Activated CD4-positive, alpha-beta memory T cell treated with anti-CD3 and anti-CD28 coated beads, Interleukin-2, amount 10 ng/mL, durations not matched to agents 7 days and 5 days (primary cell): ENCODE measurements at regions of chr7 and their contacts with region 1.

Region 1: DNA sequence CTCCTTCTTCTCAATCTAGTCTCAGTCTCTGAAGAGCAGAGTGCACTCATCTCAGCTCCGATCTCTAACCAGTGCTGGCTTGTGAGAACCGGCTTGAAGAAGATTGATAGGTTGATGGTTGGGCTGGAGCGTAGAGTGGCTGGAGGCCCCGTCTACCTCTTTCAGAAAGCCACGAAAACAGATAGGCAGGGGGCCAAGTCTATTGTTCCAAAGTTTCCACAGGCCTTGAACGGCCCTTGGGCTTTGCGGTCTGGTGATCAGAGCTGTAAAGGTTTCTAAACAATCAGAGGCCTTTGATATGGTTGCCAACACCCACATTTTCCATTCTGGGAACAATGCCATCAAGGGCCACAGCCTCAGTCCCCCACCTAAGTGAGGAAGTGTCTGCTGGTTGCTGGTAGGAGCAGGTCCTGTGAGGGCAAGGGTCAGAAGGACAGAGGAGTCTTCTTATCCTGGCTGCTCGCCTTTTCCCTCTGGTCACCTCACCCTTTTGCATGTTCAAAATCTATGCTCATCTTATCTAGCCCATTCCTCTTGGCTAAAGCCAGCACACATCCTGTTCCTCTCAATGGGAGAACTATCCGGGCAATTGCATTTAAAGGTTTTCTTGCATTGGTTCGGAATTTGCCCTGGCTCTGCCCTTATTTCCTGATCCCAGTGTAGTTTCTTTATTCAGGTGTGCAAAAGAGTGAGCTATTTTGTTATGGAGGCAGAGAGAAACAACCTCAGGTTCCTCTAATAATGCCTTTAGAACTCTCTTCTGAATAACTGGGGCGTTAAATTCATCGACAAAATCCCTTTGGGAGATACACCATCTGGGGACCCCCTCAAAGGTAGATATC is 70.3 kb upstream of the KMT2E start:
- DNase-seq: peak; percentile 80
- H3K4me3 Mint-ChIP-seq: peak overlapping the region; percentile 82
- H3K27ac Mint-ChIP-seq: peak overlapping the region; percentile 98
- H3K4me1 Mint-ChIP-seq: peaks cover 71% of the 10 kb centered on the region
- H3K27me3 Mint-ChIP-seq: no peaks in the 10 kb centered on the region

Region 2: GRCh38 chr7:104923010-104923421 is 20.7 kb before region 1 on chr7:
- CTCF ChIA-PET with region 1: interaction called, 6 read pairs
- POLR2A ChIA-PET with region 1: interaction called, 10 read pairs
- DNase-seq: peak; percentile 82
- H3K4me3 Mint-ChIP-seq: no peak overlapping the region
- H3K27ac Mint-ChIP-seq: no peak overlapping the region
- H3K4me1 Mint-ChIP-seq: peaks cover 10% of the 10 kb centered on the region
- H3K27me3 Mint-ChIP-seq: peaks cover 6% of the 10 kb centered on the region

Region 3: GRCh38 chr7:104931181-104931781 is 12.4 kb before region 1 on chr7:
- CTCF ChIA-PET with region 1: interaction called, 4 read pairs
- POLR2A ChIA-PET with region 1: interaction called, 10 read pairs
- DNase-seq: no peak
- H3K4me3 Mint-ChIP-seq: no peak overlapping the region
- H3K27ac Mint-ChIP-seq: no peak overlapping the region
- H3K4me1 Mint-ChIP-seq: no peaks in the 10 kb centered on the region
- H3K27me3 Mint-ChIP-seq: no peaks in the 10 kb centered on the region

Region 4: DNA sequence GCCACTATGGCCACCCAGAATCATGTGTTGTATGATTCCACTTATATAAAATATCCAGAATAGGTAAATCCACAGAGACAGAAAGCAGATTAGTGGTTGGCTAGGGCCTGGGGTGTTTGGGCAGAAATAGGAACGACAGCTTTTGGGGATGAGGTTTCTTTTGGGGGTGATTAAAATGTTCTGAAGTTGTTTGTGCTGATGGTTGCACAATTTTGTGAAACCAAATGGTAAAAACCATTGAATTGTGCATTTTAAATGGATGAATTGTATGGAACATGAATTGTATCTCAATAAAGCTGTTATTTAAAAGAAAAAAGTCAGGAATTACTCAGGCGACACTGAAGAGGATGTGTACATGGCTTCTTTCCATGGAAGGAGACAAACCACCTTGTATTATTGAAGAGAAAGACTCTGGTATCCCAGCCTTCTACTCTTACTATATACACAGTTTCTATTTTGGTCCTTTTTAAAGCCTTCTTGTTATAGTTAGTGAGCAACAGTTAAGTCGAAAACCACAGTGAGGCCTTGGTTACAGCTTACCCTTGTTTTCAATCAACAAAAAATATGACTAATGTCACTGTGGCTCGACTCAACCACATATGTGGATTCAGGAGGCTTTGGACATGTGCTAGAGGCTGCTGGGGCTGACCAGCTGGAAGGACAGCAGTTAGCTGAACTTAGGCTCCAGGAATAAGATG is 13.2 kb after region 1 on chr7:
- CTCF ChIA-PET with region 1: interaction called, 15 read pairs
- POLR2A ChIA-PET with region 1: interaction called, 158 read pairs
- DNase-seq: peak; percentile 65
- H3K4me3 Mint-ChIP-seq: peak overlapping the region; percentile 54
- H3K27ac Mint-ChIP-seq: peak overlapping the region; percentile 98
- H3K4me1 Mint-ChIP-seq: peaks cover 56% of the 10 kb centered on the region
- H3K27me3 Mint-ChIP-seq: no peaks in the 10 kb centered on the region

Region 5: GRCh38 chr7:104963991-104964385 is 20.3 kb after region 1 on chr7:
- CTCF ChIA-PET with region 1: interaction called, 3 read pairs
- POLR2A ChIA-PET with region 1: interaction called, 158 read pairs
- DNase-seq: no peak
- H3K4me3 Mint-ChIP-seq: no peak overlapping the region
- H3K27ac Mint-ChIP-seq: no peak overlapping the region
- H3K4me1 Mint-ChIP-seq: peaks cover 25% of the 10 kb centered on the region
- H3K27me3 Mint-ChIP-seq: no peaks in the 10 kb centered on the region

Region 6: DNA sequence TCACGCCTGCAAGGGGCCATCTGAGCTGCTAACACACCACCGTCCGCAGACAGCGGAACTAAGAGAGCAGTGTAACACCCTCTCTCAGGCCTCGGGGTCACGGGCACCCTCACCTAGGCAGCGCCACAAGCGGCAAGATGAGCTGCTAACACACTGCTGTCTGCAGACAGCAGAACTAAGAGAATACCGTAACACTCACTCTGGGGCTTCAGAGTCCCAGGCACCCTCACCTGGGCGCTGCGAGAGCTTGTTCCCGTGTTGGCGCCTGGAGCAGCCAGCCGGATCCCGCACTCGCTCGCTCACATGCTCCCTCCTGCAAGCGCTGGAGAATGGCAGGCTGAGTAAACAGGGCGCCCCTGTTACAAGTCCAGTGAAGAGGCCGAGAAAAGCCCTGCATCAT is 284.8 kb after region 1 on chr7:
- CTCF ChIA-PET with region 1: no interaction called
- POLR2A ChIA-PET with region 1: no interaction called
- DNase-seq: no peak
- H3K4me3 Mint-ChIP-seq: no peak overlapping the region
- H3K27ac Mint-ChIP-seq: no peak overlapping the region
- H3K4me1 Mint-ChIP-seq: peaks cover 12% of the 10 kb centered on the region
- H3K27me3 Mint-ChIP-seq: no peaks in the 10 kb centered on the region